ENCODE measurements at regions of chr11 and their contacts with region 1.

Region 1: GRCh38 chr11:14727215-14727614 is 83.6 kb downstream of the PDE3B start:
- DNase-seq: no peak
- ATAC-seq: no peak
- H3K4me3 ChIP-seq: no peak overlapping the region
- H3K27ac ChIP-seq: no peak overlapping the region
- H3K4me1 ChIP-seq: no peaks in the 10 kb centered on the region
- H3K27me3 ChIP-seq: no peaks in the 10 kb centered on the region
- CTCF ChIP-seq: no peak
- POLR2A ChIP-seq: no peak

Region 2: DNA sequence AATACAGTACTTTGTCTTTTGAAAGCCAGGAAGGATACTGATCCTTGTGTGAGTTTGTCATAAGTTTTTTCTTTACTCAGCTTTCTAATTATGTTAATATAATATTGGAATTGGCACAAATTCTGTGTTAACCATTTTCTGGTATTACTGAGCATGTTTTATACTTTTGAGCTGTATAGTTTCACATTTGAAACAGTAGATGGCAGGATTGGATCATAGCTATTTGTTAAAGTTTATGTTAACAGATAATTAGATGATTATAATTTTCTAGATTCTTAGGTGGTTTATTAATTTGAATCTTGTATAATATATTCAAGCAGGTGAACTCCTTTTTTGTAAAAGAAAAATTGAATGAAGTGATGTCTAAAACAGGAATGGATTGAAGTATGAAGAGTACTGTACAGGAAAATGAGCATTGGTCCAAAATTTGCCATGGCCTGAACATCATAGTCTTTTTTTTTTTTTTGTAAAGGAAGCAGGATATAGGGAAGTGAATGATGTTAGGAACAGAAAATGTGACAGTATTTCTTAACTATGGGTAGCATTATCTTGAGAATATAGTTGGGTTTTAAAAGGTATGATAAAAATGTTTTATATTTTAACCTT is 62.8 kb after region 1 on chr11:
- intact Hi-C with region 1: loop called in 1 of 10 experiments (anchors 5 kb)
- DNase-seq: no peak
- ATAC-seq: no peak
- H3K4me3 ChIP-seq: no peak overlapping the region
- H3K27ac ChIP-seq: no peak overlapping the region
- H3K4me1 ChIP-seq: peaks cover 0 to 8% (median 0%) of the 10 kb centered on the region in 12 donors
- H3K27me3 ChIP-seq: no peaks in the 10 kb centered on the region
- CTCF ChIP-seq: peak; percentile 23 to 58 (median 36)
- POLR2A ChIP-seq: no peak